ENCODE measurements at regions of chr17 and their contacts with region 1.

Region 1: GRCh38 chr17:81401723-81402529 is 6.7 kb downstream of the BAHCC1 start:
- DNase-seq: no peak
- H3K4me3 ChIP-seq: no peak overlapping the region
- H3K27ac ChIP-seq: peak overlapping the region; percentile 93 to 99 (median 97)
- H3K4me1 ChIP-seq: peaks cover 0 to 81% (median 73%) of the 10 kb centered on the region in 4 donors
- H3K27me3 ChIP-seq: no peaks in the 10 kb centered on the region
- CTCF ChIP-seq: no peak
- EP300 ChIP-seq: no peak
- POLR2A ChIP-seq: no peak

Region 2: GRCh38 chr17:81428948-81429774 is 27.2 kb after region 1 on chr17:
- intact Hi-C with region 1: loop called (anchors 2 kb)
- DNase-seq: peak; percentile 91
- H3K4me3 ChIP-seq: peak overlapping the region in 2 of 4 donors; percentile 21 to 25
- H3K27ac ChIP-seq: peak overlapping the region in 2 of 4 donors; percentile 49 to 53
- H3K4me1 ChIP-seq: peaks cover 0 to 56% (median 47%) of the 10 kb centered on the region in 4 donors
- H3K27me3 ChIP-seq: no peaks in the 10 kb centered on the region
- CTCF ChIP-seq: no peak
- EP300 ChIP-seq: no peak
- POLR2A ChIP-seq: no peak

Region 3: DNA sequence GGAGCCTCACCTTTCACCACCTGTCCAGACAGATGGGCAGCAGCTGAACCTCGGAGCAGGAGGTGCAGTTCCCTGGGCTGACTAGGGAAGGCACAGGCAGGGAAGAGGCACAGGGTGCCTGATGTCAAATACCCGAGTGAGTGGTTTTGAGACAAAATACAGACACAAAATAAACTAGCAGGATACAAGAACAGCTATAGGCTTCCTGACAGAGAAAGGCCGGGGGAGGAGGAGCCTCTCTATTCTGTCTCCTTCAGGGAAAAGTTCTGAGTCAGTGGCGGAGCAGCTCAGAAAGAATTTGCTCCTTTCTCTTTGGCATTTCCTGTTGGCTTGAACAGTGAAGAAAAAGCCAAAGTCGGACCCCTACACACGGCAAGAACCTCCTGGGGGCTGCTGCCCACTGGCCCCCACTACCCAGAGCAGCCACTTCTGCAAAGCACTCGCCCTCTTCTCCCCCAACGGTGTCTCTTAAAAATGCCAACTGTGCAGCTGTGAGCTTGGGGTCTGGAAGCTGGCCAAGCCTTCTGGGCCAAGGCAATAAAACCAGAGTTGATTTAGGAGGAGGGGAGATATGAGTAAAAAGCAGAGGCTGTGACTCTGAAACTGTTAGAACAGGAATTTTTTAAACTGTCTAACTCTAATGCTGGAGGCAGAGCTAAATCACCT is 164.7 kb after region 1 on chr17:
- intact Hi-C with region 1: no loop called
- DNase-seq: peak; percentile 90
- H3K4me3 ChIP-seq: peak overlapping the region in 3 of 4 donors; percentile 22 to 33 (median 23)
- H3K27ac ChIP-seq: peak overlapping the region; percentile 76 to 86 (median 84)
- H3K4me1 ChIP-seq: peaks cover 0 to 50% (median 40%) of the 10 kb centered on the region in 4 donors
- H3K27me3 ChIP-seq: no peaks in the 10 kb centered on the region
- CTCF ChIP-seq: no peak
- EP300 ChIP-seq: no peak
- POLR2A ChIP-seq: no peak